Activated B cell treated with CpG ODN at 0.5 μM for 24 hours (primary cell): ENCODE measurements at regions of chr6 and their contacts with region 1.

Region 1: DNA sequence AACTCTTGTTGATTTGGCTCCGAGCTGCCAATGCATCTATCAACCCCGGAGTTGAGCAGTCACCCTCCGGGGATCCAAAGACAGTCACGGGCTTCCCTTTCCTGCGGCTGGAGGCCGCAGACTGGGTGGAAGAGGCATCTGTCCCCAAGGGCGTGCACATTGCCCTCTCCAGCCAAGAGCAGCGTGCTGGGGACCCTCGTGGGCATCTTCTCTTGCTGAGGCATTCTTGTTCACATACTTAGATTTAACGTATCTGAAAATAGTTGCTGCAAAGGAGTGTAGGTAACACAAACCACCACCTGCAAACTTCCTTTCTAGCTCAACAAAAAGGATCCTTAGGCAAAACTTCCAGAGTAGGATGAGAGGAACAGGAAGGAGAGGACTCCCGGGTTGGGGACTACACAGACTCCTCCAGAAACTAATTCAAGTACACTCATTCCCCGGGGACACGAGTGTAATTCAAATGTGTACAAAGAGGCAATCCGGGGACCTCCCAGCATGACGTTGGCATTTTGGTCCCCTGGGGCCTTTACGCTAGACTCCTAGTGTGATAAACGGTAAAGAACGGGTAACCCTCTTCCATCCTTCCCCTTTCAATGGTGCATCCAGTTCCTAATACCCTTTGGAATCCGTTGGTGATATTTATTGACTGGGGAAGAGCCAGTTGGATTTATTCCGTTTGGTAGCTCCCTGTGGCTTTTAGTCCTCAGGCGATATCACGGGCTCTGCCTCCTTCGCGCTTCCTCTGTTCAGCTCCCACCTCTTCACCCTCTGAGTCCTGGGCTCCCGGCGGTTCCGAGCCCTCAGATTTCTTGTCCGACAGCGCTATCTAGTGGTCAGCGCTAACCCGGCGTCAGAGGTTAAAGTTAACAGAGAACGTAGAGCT is 2.7 kb upstream of the COL12A1 start:
- DNase-seq: peak; percentile 63
- ATAC-seq: peak; percentile 76
- H3K4me3 Mint-ChIP-seq: peak overlapping the region; percentile 78
- H3K27ac Mint-ChIP-seq: peak overlapping the region; percentile 30
- H3K4me1 Mint-ChIP-seq: peaks cover 52% of the 10 kb centered on the region
- H3K27me3 Mint-ChIP-seq: peaks cover 71% of the 10 kb centered on the region
- CTCF ChIP-seq: peak; percentile 56

Region 2: DNA sequence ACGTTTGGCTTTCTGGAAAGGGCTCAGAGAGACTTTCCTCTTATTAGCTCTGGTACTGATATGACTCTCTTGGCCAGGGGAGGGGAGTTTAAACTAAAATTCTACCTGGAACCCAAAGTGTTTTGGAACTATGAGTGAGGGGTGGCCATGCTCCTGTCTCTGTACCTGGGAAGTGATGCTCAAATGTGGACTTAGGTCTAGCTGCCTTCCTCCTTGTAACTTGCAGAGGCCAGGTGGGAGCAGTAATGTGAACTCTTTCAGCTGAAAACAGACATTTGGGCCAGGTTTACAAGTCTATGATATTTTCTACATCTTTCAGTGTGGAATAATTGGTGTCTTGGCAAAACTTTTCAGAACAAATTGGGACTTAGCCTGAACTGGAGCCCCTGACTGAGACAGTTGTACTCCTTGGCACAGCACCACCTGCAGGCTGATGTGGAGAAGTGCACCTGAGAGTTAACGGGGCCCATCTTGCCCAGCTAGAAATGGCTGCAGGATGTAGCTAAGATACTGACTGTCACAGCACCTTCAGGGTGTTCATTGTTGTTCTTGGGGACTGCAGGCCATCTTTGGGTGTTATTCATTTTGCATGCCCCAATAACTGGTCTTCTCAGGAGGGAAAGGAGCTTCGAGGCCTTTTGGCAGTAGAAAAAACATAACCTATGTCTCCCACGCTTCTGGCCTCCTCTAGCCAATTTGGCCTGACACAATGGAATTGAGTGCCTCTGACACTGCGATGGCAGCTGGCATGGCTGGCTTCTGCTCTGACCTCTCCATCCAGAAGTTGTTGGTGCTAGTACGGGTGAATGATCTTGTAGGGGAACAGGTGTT is 1475.5 kb before region 1 on chr6:
- CTCF ChIA-PET with region 1: interaction called, 272 read pairs
- POLR2A ChIA-PET with region 1: no interaction called
- intact Hi-C with region 1: no loop called
- DNase-seq: peak; percentile 27
- ATAC-seq: peak; percentile 95
- H3K4me3 Mint-ChIP-seq: no peak overlapping the region
- H3K27ac Mint-ChIP-seq: no peak overlapping the region
- H3K4me1 Mint-ChIP-seq: peaks cover 3% of the 10 kb centered on the region
- H3K27me3 Mint-ChIP-seq: peaks cover 3% of the 10 kb centered on the region
- CTCF ChIP-seq: peak; percentile 60

Region 3: GRCh38 chr6:73854998-73855718 is 1353.4 kb before region 1 on chr6:
- CTCF ChIA-PET with region 1: interaction called, 33 read pairs
- POLR2A ChIA-PET with region 1: no interaction called
- intact Hi-C with region 1: loop called (anchors 1 kb)
- DNase-seq: no peak
- ATAC-seq: no peak
- H3K4me3 Mint-ChIP-seq: no peak overlapping the region
- H3K27ac Mint-ChIP-seq: no peak overlapping the region
- H3K4me1 Mint-ChIP-seq: no peaks in the 10 kb centered on the region
- H3K27me3 Mint-ChIP-seq: no peaks in the 10 kb centered on the region
- CTCF ChIP-seq: peak; percentile 28

Region 4: DNA sequence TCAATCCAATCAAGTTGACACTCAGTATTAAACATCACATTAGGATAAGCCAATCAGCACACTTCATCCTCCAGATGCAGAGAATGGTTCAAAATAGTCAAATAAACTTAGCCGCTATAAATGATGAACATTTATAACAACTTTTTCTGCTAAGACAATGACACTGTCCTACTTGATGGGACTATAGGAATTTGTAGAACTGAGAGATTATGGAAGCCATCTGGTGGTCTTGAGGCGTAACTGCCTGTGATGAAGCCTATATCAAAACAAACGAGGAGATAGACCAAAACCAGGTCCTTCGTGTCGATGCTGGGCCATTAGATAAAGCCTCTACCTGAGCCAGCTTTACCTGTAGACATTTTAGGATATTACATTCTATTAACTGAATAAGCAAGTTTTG is 633.7 kb before region 1 on chr6:
- CTCF ChIA-PET with region 1: no interaction called
- POLR2A ChIA-PET with region 1: no interaction called
- intact Hi-C with region 1: loop called (anchors 2 kb)
- DNase-seq: no peak
- ATAC-seq: no peak
- H3K4me3 Mint-ChIP-seq: no peak overlapping the region
- H3K27ac Mint-ChIP-seq: no peak overlapping the region
- H3K4me1 Mint-ChIP-seq: no peaks in the 10 kb centered on the region
- H3K27me3 Mint-ChIP-seq: no peaks in the 10 kb centered on the region
- CTCF ChIP-seq: no peak

Region 5: GRCh38 chr6:75284632-75285286 is 76.2 kb after region 1 on chr6 and contains the start of gene TMEM30A:
- CTCF ChIA-PET with region 1: interaction called, 3 read pairs
- POLR2A ChIA-PET with region 1: no interaction called
- intact Hi-C with region 1: loop called (anchors 1 kb)
- DNase-seq: peak; percentile 84
- ATAC-seq: peak; percentile 96
- H3K4me3 Mint-ChIP-seq: no peak within 1 kb of the TSS
- H3K27ac Mint-ChIP-seq: no peak within 1 kb of the TSS
- H3K4me1 Mint-ChIP-seq: peaks cover 27% of the 10 kb centered on the region
- H3K27me3 Mint-ChIP-seq: no peaks in the 10 kb centered on the region
- CTCF ChIP-seq: no peak
- total RNA-seq, gene TMEM30A: 36.8 and 38.7 TPM in 2 replicates